ENCODE measurements at regions of chr3 and their contacts with region 1.

Region 1: GRCh38 chr3:45841757-45842491 is at the start of gene LZTFL1:
- DNase-seq: peak; percentile 91
- H3K4me3 Mint-ChIP-seq: peak within 1 kb of the TSS; percentile 87
- H3K27ac Mint-ChIP-seq: peak within 1 kb of the TSS; percentile 18
- H3K4me1 Mint-ChIP-seq: peaks cover 38% of the 10 kb centered on the region
- H3K27me3 Mint-ChIP-seq: peaks cover 45% of the 10 kb centered on the region
- total RNA-seq, gene LZTFL1: 7.9 to 8.4 TPM

Region 2: DNA sequence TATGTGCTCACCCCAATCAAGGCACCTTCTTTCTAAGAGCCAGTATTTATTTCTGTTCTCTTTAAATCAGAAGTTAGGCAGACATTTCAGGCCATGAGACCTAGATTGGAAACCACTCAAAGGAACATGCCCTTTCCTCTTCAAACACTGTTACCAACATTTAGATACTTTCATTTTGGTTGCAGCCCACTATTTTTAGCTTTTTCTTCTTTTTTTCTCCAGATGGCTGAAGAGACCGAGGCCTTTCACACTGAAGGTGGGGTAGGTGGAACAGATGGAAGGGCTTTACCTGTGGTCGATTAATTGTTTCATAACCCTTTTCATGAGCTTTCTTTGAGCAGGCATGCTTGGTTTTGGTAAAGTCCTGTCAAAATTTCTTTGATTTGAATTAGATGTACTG is 10.9 kb after region 1 on chr3:
- CTCF ChIA-PET with region 1: interaction called, 4 read pairs
- POLR2A ChIA-PET with region 1: interaction called, 22 read pairs
- DNase-seq: no peak
- H3K4me3 Mint-ChIP-seq: no peak overlapping the region
- H3K27ac Mint-ChIP-seq: peak overlapping the region; percentile 18
- H3K4me1 Mint-ChIP-seq: peaks cover 27% of the 10 kb centered on the region
- H3K27me3 Mint-ChIP-seq: peaks cover 87% of the 10 kb centered on the region

Region 3: DNA sequence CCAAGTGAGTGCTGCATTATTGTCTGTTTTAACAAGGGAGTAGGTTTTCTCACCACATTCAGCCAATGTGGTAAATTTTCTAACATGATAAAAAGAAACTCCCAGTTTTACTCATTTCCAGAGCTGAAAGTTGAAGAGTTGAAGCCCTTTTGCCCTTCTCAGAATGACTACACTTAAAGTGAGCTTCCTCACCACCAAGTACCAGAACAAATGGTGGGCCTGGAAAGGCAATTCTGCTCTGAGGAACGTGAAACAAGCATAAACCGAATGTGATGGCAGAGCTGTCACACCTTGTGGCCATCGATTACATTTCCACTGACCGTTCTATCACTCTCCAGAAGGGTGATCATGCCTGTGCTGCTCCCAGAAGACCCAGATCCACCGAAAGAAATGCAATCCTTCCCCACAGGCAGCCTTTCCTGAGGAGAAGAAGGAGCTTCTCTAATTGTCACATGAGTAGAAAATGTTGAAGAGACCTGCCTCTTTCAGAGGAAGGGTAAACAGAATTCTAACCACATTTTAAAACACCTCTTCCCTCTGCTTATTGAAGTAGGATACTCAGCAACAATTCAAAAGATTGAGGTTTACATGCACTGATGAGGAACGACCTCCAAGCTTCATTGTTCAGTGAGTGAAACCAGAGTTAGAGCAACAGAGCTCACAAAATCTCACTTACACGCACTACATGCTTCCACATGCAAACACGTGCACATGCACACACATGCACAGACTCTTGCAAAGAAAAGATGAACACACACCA is 23.0 kb after region 1 on chr3:
- CTCF ChIA-PET with region 1: interaction called, 7 read pairs
- POLR2A ChIA-PET with region 1: interaction called, 23 read pairs
- DNase-seq: peak; percentile 37
- H3K4me3 Mint-ChIP-seq: no peak overlapping the region
- H3K27ac Mint-ChIP-seq: peak overlapping the region; percentile 5
- H3K4me1 Mint-ChIP-seq: peaks cover 67% of the 10 kb centered on the region
- H3K27me3 Mint-ChIP-seq: peaks cover 82% of the 10 kb centered on the region

Region 4: DNA sequence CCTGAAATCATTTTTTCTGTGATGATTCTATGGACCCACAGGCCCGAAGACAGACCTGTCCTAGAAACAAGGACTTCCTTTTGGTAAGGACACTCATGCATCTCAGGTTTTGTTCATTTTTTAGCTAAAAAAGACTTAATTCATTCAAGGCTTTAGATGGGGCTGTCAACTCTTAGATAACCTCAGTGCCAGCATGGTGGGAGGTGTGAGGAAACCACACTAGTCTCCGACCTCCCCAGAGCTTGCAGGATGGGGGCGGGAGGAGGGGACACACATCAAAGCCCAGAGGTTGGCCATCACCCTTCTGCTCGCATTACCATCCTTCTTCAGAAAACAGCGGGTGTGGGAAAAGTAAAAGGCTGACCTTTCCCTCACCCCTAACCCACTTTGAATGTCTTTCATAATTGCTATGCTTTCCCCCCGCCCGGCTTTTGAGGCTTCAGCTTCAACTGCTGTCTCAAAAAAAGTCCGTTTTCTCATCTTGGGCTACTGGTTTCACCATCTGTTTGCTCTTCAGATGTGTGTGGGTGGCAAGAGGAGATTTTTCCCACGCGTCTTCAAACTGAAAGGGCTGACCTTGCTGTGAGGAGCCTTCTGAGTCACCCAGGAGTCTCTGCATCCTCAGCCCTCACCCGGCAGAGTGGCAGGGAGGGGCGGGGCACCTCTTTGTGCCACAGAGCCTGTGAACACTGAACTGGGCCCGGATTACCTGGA is 73.8 kb after region 1 on chr3:
- CTCF ChIA-PET with region 1: no interaction called
- POLR2A ChIA-PET with region 1: interaction called, 11 read pairs
- DNase-seq: peak; percentile 83
- H3K4me3 Mint-ChIP-seq: peak overlapping the region; percentile 16
- H3K27ac Mint-ChIP-seq: peak overlapping the region; percentile 16
- H3K4me1 Mint-ChIP-seq: peaks cover 41% of the 10 kb centered on the region
- H3K27me3 Mint-ChIP-seq: peaks cover 34% of the 10 kb centered on the region

Region 5: DNA sequence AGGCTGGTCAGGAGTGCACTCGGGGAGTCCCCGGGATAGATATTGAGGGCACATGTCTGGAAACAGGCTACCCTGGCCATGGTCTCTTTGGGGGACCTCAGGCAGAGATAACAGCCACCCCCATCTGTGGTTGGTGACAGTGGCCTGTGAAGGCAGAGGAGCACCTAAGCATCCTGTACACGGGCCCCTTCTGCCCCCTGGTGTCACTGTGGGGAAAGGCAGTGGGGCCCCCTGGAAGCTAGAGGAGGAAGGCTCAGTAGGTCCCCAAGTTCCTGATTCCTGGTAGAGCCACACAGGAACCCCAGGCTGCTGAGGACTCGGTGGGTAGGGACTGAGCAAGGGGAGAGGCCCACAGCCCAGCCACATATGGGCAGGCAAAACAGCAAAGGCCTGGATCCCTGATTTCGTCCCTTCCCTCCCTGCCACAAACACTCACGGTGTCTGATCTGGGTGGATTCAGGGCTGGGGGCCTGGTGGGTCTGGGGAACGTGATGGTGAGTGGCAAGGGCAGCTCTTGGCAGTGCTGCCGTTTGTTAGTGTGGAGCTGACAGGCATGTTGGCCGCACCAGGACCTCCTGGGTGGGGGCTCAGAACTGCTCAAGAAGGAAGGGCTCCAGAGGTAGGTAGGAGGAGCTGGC is 87.2 kb after region 1 on chr3:
- CTCF ChIA-PET with region 1: interaction called, 13 read pairs
- POLR2A ChIA-PET with region 1: interaction called, 3 read pairs
- DNase-seq: peak; percentile 71
- H3K4me3 Mint-ChIP-seq: no peak overlapping the region
- H3K27ac Mint-ChIP-seq: no peak overlapping the region
- H3K4me1 Mint-ChIP-seq: peaks cover 5% of the 10 kb centered on the region
- H3K27me3 Mint-ChIP-seq: no peaks in the 10 kb centered on the region

Measured in activated CD4-positive, alpha-beta memory T cell treated with anti-CD3 and anti-CD28 coated beads, Interleukin-2, amount 10 ng/mL, durations not matched to agents 7 days and 5 days (primary cell).